Aorta (tissue), 5 donors: ENCODE measurements at regions of chr2 and their contacts with region 1.

Region 1: DNA sequence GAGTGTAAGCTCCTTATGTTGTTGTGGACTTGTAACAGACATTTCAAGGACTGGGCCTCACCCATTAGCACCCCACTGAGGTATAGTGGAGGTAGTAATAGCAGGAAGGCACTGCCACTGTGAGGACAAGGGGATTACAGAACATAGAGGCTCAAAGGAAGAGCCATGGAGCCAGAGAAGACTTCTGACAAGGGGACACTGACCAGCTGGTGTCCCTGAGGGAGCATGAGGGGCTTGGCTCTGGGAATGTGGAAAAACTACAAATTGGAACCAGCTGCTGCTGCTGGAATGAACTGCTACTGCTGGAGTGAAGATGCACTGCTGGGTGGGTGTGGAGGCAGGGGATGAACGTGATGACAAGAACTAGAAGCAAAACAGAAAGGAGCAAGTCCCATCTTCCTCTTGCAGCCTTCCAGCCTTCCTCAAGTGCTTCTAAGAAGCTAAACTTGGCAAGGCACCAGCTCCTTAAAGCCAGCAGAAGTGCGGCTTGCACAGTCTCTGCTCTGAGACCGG is 167.3 kb upstream of the NOSTRIN start:
- DNase-seq: peak in 1 of 2 donors; percentile 56
- ATAC-seq: peak; percentile 7
- H3K4me3 ChIP-seq: no peak overlapping the region
- H3K27ac ChIP-seq: peak overlapping the region in 1 of 2 donors; percentile 6
- H3K4me1 ChIP-seq: peaks cover 0 to 6% of the 10 kb centered on the region in 2 donors
- H3K27me3 ChIP-seq: no peaks in the 10 kb centered on the region

Region 2: DNA sequence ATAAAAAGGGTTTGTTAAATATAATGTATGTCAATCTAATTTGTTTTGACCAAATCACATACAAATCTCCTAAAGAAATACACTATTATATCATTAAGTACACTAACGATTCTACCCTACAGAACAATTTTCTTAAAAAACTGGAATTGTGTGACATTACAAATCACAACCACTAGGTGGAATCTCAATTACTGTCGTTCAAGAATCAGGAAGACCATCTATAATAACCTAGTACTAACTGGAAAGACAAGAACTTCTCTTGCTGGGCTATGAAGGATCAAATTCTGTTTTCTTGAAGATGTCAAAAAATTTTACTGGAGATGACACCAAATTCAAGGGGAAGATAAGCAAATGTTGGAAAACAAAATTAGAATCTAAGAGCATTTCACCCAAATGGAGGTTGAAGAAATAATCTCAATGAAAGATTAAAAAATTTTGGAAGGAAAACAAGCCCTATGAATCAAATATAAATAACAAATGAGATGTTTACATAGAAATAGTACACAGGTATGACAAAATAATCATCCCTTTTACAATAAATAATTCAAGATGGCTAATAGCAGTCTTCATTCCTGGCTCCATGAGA is 498.6 kb before region 1 on chr2:
- intact Hi-C with region 1: loop called in 1 of 2 experiments (anchors 5 kb)
- DNase-seq: no peak
- ATAC-seq: no peak
- H3K4me3 ChIP-seq: no peak overlapping the region
- H3K27ac ChIP-seq: no peak overlapping the region
- H3K4me1 ChIP-seq: no peaks in the 10 kb centered on the region
- H3K27me3 ChIP-seq: no peaks in the 10 kb centered on the region

Region 3: GRCh38 chr2:168455648-168456520 is 179.2 kb before region 1 on chr2 and contains the start of gene CERS6:
- intact Hi-C with region 1: loop called in 1 of 2 experiments (anchors 10 kb)
- DNase-seq: peak; percentile 98
- ATAC-seq: peak; percentile 98
- H3K4me3 ChIP-seq: peak within 1 kb of the TSS; percentile 84
- H3K27ac ChIP-seq: peak within 1 kb of the TSS in 1 of 2 donors; percentile 9
- H3K4me1 ChIP-seq: peaks cover 0 to 3% of the 10 kb centered on the region in 2 donors
- H3K27me3 ChIP-seq: no peaks in the 10 kb centered on the region
- total RNA-seq, gene CERS6: 8.3 to 10.6 TPM